ENCODE measurements at regions of chr5 and their contacts with region 1.

Region 1: DNA sequence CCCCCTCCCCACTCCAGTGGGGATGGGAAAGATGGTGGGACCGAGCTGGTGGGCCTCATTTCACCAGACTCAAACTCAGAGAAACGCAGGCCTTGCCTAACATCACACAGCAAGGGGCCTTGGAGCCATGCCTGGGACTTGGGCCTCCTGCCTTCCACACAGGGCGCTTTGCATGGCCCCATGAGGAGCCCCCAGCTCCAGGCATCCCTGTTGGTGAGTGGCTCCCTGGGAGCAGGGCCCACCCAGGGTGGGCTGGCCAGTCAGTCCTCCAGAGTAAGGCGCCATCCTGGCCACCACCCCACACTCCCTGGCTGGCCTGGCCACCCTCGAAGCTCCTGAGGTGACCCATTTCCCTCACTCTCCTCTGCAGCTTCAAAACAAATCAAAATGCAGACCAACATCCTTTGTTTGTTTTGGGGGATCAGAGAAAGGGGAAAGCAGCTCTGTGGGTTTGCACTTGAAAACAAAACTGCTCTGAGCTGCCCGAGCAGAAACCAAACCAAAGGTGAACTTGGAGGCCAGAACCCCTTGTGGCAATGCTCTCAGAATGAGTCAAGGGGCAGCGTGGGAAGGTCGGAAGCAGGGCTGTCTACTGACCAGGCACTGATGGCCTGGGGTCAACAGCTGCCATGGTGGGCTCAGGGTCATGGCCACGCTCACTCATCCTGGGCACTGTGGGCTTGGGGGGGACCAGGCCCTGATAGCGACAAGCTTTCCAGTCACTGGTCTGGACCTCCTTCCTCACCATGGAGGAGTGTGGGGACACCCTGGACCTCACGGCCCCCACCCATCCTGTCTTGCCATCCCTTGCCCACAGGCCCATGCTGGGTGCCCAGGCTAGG is 37.0 kb upstream of the VDAC1 start:
- DNase-seq: no peak
- ATAC-seq: no peak
- H3K4me3 ChIP-seq: no peak overlapping the region
- H3K27ac ChIP-seq: no peak overlapping the region
- H3K4me1 ChIP-seq: no peaks in the 10 kb centered on the region
- H3K27me3 ChIP-seq: no peaks in the 10 kb centered on the region
- CTCF ChIP-seq: no peak
- POLR2A ChIP-seq: no peak
- RAD21 ChIP-seq: no peak

Region 2: GRCh38 chr5:134026521-134027268 is 15.1 kb before region 1 on chr5:
- CTCF ChIA-PET with region 1: interaction called, 30 read pairs
- POLR2A ChIA-PET with region 1: no interaction called
- RAD21 ChIA-PET with region 1: interaction called in 1 of 2 experiments, 3 read pairs
- intact Hi-C with region 1: no loop called
- DNase-seq: peak; percentile 56
- ATAC-seq: peak; percentile 99
- H3K4me3 ChIP-seq: no peak overlapping the region
- H3K27ac ChIP-seq: no peak overlapping the region
- H3K4me1 ChIP-seq: peaks cover 0 to 8% of the 10 kb centered on the region in 2 experiments; a peak in 2 of 4 replicates
- H3K27me3 ChIP-seq: no peaks in the 10 kb centered on the region
- CTCF ChIP-seq: peak; percentile 52 to 76 (median 68); a peak in 5 of 6 replicates
- POLR2A ChIP-seq: no peak
- RAD21 ChIP-seq: peak; percentile 58

Region 3: GRCh38 chr5:134101686-134102439 is 60.1 kb after region 1 on chr5:
- CTCF ChIA-PET with region 1: interaction called, 8 read pairs
- POLR2A ChIA-PET with region 1: no interaction called
- RAD21 ChIA-PET with region 1: no interaction called
- intact Hi-C with region 1: loop called (anchors 5 kb)
- DNase-seq: peak; percentile 21
- ATAC-seq: peak; percentile 98
- H3K4me3 ChIP-seq: no peak overlapping the region
- H3K27ac ChIP-seq: no peak overlapping the region
- H3K4me1 ChIP-seq: peaks cover 0 to 13% of the 10 kb centered on the region in 2 experiments; a peak in 1 of 4 replicates
- H3K27me3 ChIP-seq: no peaks in the 10 kb centered on the region
- CTCF ChIP-seq: peak; percentile 79 to 97 (median 88)
- POLR2A ChIP-seq: no peak
- RAD21 ChIP-seq: peak; percentile 74

Region 4: DNA sequence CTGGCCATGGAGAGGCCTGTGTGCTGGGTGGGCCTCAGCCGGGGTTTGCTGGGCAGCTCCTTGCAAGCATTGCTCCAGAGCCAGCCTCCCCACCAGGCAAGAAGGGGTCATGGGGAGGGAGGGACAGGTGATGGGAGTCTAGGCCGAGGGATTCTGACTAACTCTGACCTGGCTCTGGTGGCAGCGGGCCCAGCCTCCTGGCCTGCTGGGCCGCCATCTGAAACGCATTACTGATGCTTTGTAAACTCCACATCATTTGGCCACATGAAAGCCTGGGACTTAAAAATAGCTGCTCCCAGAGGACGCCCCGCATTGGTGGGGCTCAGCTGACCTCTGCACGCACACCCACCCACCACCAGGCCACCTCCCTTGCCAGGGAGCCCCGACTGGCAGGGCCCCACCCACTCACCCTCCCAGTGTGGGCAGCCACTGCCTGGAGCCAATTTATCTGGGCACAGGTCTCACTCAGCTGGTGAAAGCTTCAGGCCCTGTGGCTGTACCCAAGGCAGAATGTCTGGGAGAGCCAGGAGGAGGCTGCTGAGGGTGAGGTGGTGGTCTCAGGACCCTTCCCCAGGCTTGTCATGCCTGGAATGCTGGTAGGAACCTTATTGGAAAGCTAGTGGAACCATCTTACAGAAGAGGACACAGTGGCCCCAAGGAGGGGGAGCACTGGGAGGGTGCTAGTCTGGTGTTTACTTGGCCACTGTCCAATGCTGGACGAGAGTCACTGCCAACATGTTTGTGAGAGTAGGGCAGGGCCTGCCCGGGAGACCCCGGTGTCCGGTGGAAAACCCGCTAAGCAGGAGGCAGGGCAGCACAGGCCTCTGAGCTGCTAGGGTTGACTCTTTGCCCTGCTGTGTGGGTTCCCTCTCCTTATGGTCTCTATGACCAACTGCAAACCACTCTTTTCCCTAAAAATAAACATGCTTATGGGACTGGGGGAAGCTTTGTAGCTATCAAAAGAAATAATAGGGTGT is 83.5 kb after region 1 on chr5:
- CTCF ChIA-PET with region 1: interaction called, 5 read pairs
- POLR2A ChIA-PET with region 1: no interaction called
- RAD21 ChIA-PET with region 1: no interaction called
- intact Hi-C with region 1: loop called (anchors 5 kb)
- DNase-seq: peak; percentile 60
- ATAC-seq: peak; percentile 84
- H3K4me3 ChIP-seq: peak overlapping the region in 1 of 2 experiments; percentile 1; a peak in 1 of 4 replicates
- H3K27ac ChIP-seq: peak overlapping the region; percentile 41
- H3K4me1 ChIP-seq: peaks cover 22 to 37% of the 10 kb centered on the region in 2 experiments
- H3K27me3 ChIP-seq: no peaks in the 10 kb centered on the region
- CTCF ChIP-seq: no peak
- POLR2A ChIP-seq: no peak
- RAD21 ChIP-seq: no peak

Region 5: GRCh38 chr5:134140530-134141201 is 98.9 kb after region 1 on chr5:
- CTCF ChIA-PET with region 1: interaction called, 91 read pairs
- POLR2A ChIA-PET with region 1: no interaction called
- RAD21 ChIA-PET with region 1: interaction called, 6 to 9 read pairs
- intact Hi-C with region 1: loop called (anchors 1 kb)
- DNase-seq: peak; percentile 45
- ATAC-seq: peak; percentile 89
- H3K4me3 ChIP-seq: no peak overlapping the region
- H3K27ac ChIP-seq: peak overlapping the region; percentile 34; the same call in 1 of the 2 replicates
- H3K4me1 ChIP-seq: peaks cover 0 to 19% of the 10 kb centered on the region in 2 experiments; a peak in 1 of 4 replicates
- H3K27me3 ChIP-seq: no peaks in the 10 kb centered on the region
- CTCF ChIP-seq: peak; percentile 84 to 94 (median 84)
- POLR2A ChIP-seq: no peak
- RAD21 ChIP-seq: peak; percentile 73

Region 6: GRCh38 chr5:134145779-134146581 is 104.2 kb after region 1 on chr5:
- CTCF ChIA-PET with region 1: interaction called, 91 read pairs
- POLR2A ChIA-PET with region 1: no interaction called
- RAD21 ChIA-PET with region 1: interaction called, 6 to 9 read pairs
- intact Hi-C with region 1: loop called (anchors 1 kb)
- DNase-seq: peak; percentile 57
- ATAC-seq: peak; percentile 93
- H3K4me3 ChIP-seq: no peak overlapping the region
- H3K27ac ChIP-seq: no peak overlapping the region
- H3K4me1 ChIP-seq: peaks cover 0 to 5% of the 10 kb centered on the region in 2 experiments; a peak in 1 of 4 replicates
- H3K27me3 ChIP-seq: no peaks in the 10 kb centered on the region
- CTCF ChIP-seq: peak; percentile 91 to 94 (median 93)
- POLR2A ChIP-seq: no peak
- RAD21 ChIP-seq: peak; percentile 73

Region 7: GRCh38 chr5:134289509-134290113 is 247.8 kb after region 1 on chr5:
- CTCF ChIA-PET with region 1: interaction called, 16 read pairs
- POLR2A ChIA-PET with region 1: no interaction called
- RAD21 ChIA-PET with region 1: no interaction called
- intact Hi-C with region 1: loop called (anchors 1 kb)
- DNase-seq: peak; percentile 83
- ATAC-seq: peak; percentile 99
- H3K4me3 ChIP-seq: no peak overlapping the region
- H3K27ac ChIP-seq: no peak overlapping the region
- H3K4me1 ChIP-seq: no peaks in the 10 kb centered on the region
- H3K27me3 ChIP-seq: no peaks in the 10 kb centered on the region
- CTCF ChIP-seq: peak; percentile 53 to 97 (median 78)
- POLR2A ChIP-seq: no peak
- RAD21 ChIP-seq: peak; percentile 99